ENCODE measurements at regions of chr12 and their contacts with region 1.

Region 1: DNA sequence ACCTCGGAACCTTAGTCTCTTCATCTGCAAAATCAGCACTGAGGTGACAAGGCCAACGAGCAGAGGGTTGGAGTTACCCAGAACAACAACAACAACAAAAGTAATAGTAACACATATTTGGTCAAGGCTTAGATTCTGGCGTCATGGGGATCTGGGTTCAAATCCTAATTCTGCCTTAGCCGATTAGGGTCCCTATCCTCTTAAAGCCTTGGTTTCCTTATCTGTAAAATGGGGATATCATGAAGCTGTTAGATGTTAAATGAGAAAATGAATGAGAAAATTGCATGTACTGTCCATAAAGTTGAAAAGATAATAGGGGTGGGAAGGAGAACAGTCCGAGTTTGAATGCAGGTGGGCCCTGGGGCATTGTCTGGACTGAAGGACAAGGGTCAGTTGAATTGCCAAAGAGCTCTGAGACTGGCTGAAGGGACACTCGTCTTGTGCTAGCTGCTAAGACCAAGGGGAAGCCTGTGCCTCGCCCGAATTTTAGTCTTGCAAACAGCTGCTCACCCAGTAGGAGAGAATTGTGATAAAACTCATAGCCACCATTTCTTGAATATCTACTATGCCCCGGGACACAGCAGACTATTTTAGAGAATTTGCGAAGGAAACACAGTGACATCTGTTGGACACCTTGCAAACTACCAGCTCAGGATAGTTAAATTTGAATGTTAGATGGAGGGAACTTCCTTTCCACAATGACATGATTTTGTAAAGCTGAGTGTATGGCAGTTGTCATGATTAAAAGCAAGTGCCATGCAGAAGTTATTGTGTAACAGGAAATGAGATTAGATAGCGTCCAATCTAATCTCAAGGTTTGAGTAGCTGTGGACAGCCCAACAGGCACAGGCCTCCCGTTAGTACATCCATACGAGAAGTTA is 6.8 kb upstream of the HNF1A start:
- H3K4me3 Mint-ChIP-seq: no peak overlapping the region
- H3K27ac Mint-ChIP-seq: no peak overlapping the region
- H3K4me1 Mint-ChIP-seq: peaks cover 10% of the 10 kb centered on the region
- H3K27me3 Mint-ChIP-seq: no peaks in the 10 kb centered on the region

Region 2: DNA sequence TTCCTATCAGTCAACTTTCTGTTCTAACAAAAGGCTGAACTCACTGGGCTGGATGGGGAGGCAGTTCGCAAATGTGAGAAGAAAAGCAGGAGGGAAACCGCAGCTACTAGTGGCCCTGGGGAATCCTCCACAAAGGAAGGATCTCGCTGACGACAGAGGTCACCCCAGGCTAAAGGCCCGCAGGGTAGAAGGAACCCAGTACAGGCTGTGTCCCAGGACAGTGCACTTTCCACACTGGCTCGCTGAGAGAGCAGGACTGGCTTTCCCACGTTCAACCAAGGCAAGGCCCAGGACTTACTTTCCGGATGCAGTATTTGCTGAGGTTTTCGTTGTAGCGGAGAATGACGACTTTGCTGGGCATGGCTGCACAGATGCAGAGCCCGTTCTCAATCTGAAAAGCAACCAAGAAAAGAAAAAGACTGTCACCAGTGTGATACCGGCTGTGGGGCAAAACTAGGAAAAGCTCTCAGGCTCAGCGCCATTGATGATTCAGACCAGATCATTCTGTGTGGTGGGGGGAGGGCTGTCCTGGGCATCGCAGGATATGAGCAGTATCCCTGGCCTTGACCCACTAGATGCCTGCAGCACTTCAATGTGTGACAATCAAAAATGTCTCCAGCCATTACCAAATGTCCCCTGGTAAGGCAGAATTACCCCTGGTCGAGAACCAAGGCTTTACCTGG is 1267.3 kb before region 1 on chr12:
- intact Hi-C with region 1: no loop called
- H3K4me3 Mint-ChIP-seq: no peak overlapping the region
- H3K27ac Mint-ChIP-seq: no peak overlapping the region
- H3K4me1 Mint-ChIP-seq: no peaks in the 10 kb centered on the region
- H3K27me3 Mint-ChIP-seq: no peaks in the 10 kb centered on the region

Region 3: DNA sequence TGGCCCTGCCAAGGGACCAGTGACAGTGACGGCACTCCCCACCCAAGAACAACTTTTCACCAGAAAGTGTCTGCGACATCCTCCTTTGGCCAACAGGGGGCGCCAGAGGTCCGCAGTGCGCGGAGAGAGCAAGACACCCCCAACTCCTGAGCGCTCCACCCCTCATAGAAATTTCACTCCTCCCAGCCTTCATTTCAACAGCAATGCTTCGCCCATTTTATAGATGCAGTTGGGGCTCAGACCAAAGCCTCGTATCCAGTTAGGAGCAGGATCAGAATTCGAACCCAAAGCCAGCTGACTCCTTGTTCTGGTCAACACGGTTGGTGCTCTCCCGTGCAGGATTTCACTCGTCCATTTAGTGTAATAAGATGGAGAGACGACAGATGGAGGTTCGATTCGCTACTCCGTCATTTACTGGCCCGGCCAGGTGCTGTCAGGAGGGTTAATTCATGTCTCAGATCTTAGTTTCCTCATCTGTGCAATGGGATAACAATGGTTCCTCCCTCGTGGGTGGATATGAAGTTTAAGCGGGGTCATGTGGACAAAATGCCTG is 388.0 kb before region 1 on chr12:
- intact Hi-C with region 1: loop called (anchors 1 kb)
- H3K4me3 Mint-ChIP-seq: peak overlapping the region; percentile 42
- H3K27ac Mint-ChIP-seq: no peak overlapping the region
- H3K4me1 Mint-ChIP-seq: peaks cover 33% of the 10 kb centered on the region
- H3K27me3 Mint-ChIP-seq: peaks cover 32% of the 10 kb centered on the region

Region 4: GRCh38 chr12:120686690-120687577 is 284.6 kb before region 1 on chr12 and contains the start of gene MLEC:
- intact Hi-C with region 1: loop called (anchors 1 kb)
- H3K4me3 Mint-ChIP-seq: peak within 1 kb of the TSS; percentile 88
- H3K27ac Mint-ChIP-seq: peak within 1 kb of the TSS; percentile 98
- H3K4me1 Mint-ChIP-seq: peaks cover 65% of the 10 kb centered on the region
- H3K27me3 Mint-ChIP-seq: no peaks in the 10 kb centered on the region

Region 5: GRCh38 chr12:120725659-120726509 is 245.7 kb before region 1 on chr12 and contains the start of gene ACADS:
- intact Hi-C with region 1: loop called (anchors 10 kb)
- H3K4me3 Mint-ChIP-seq: peak within 1 kb of the TSS; percentile 78
- H3K27ac Mint-ChIP-seq: peak within 1 kb of the TSS; percentile 70
- H3K4me1 Mint-ChIP-seq: peaks cover 22% of the 10 kb centered on the region
- H3K27me3 Mint-ChIP-seq: no peaks in the 10 kb centered on the region

Region 6: GRCh38 chr12:120856980-120857379 is 114.6 kb before region 1 on chr12:
- intact Hi-C with region 1: loop called (anchors 1 kb)
- H3K4me3 Mint-ChIP-seq: no peak overlapping the region
- H3K27ac Mint-ChIP-seq: peak overlapping the region; percentile 72
- H3K4me1 Mint-ChIP-seq: peaks cover 47% of the 10 kb centered on the region
- H3K27me3 Mint-ChIP-seq: no peaks in the 10 kb centered on the region

Measured in dendritic cell treated with granulocyte-macrophage colony-stimulating factor and Interleukin-4, amounts not matched to agents 40 ng/mL and 50 ng/mL, for 4 days (primary cell).